K562 (cell line): ENCODE measurements at regions of chr1 and their contacts with region 1.

Region 1: DNA sequence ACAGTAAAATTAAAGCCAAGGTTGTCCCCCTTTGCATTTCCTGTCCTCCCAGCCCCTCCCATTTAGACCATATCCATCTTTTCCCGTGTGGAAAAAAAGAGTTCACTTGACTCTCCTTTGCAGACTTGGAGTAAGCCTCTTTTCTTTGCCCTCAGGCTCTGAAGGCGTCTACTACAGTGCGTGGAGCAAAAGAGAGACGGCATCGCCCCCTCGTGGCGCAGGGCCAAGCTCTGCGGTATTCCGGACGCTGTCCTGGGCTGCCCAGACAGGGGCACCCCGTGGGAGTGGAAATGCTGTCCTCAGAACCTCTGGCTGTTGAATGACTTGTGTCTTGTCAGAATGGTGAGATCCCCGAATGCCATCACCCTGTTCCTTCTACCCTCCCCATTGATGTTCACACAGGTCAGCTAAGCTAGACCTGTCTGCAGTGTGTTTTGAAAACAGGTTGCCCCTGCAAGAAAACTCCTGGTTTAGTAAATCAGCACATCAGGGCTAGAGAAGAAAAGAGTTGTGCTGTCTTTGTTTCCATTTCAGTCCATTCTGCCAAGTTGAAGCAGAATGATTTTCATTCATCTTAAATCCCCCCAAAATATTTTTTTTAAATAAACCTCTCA is 12.3 kb upstream of the GJA8 start:
- DNase-seq: peak; percentile 64 to 83 (median 70)
- ATAC-seq: peak; percentile 100
- H3K4me3 ChIP-seq: no peak overlapping the region
- H3K27ac ChIP-seq: no peak overlapping the region
- H3K4me1 ChIP-seq: no peaks in the 10 kb centered on the region
- H3K27me3 ChIP-seq: peaks cover 2 to 6% of the 10 kb centered on the region in 2 experiments; a peak in 4 of 5 replicates
- CTCF ChIP-seq: peak; percentile 89 to 94 (median 89)
- EP300 ChIP-seq: no peak
- POLR2A ChIP-seq: no peak
- RAD21 ChIP-seq: peak; percentile 81 to 98

Region 2: DNA sequence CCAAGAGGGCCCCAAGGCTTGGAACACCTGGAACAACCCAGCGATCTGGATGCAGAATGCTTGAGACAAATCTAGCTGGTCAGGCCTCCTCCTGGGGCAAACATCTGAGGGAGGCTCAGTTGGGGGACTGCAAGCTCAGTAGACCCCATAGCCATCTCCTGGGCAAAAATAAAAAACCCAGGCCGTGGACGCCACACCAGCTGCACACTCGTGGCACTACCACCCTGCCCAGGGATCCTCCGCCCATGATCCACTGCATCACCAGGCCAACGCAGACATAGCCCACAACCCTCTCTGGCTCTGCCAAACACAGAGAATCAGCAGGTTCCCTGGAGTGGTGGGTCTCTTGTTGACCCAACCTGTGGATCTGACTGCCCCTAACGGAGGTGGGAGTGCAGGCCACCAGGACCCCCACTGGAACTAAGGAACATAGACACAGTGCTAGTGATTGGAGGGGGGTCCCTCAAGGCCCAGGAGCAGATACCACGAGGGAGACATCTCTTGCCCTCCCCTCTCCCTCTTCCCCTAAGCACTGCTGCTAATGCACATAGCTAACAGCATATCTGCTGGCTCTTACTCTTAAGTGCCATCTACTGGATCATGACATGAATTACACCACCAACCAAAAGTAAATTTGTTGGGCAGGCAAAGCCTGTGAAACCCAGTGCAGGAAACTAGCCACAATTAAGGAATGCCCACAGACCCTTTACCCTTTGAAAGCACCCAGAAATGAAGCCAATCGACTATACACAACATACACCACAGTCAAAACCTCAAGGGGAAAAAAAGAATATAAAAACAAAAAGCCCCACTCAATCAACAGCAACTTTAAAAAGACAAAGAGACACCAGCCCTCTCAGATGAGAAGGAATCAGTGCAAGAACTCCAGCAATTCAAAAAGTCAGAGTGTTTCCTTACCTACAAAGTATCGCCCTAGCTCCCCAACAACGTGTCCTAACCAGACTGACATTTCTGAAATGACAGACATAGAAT is 500.5 kb before region 1 on chr1:
- CTCF ChIA-PET with region 1: no interaction called
- POLR2A ChIA-PET with region 1: no interaction called
- in situ Hi-C with region 1: no loop called
- intact Hi-C with region 1: loop called (anchors 10 kb)
- DNase-seq: peak; percentile 47 to 66 (median 56)
- ATAC-seq: peak; percentile 96
- H3K4me3 ChIP-seq: no peak overlapping the region
- H3K27ac ChIP-seq: no peak overlapping the region
- H3K4me1 ChIP-seq: peaks cover 0 to 9% of the 10 kb centered on the region in 2 experiments; a peak in 2 of 5 replicates
- H3K27me3 ChIP-seq: no peaks in the 10 kb centered on the region
- CTCF ChIP-seq: peak; percentile 73 to 83 (median 78)
- EP300 ChIP-seq: no peak
- POLR2A ChIP-seq: no peak
- RAD21 ChIP-seq: peak; percentile 86 to 95

Region 3: GRCh38 chr1:147635342-147635741 is 254.9 kb before region 1 on chr1:
- CTCF ChIA-PET with region 1: no interaction called
- POLR2A ChIA-PET with region 1: no interaction called
- in situ Hi-C with region 1: loop called (anchors 5 kb)
- intact Hi-C with region 1: loop called (anchors 5 kb)
- DNase-seq: no peak
- ATAC-seq: no peak
- H3K4me3 ChIP-seq: no peak overlapping the region
- H3K27ac ChIP-seq: no peak overlapping the region
- H3K4me1 ChIP-seq: peaks cover 0 to 2% of the 10 kb centered on the region in 2 experiments; a peak in 1 of 5 replicates
- H3K27me3 ChIP-seq: peaks cover 2 to 17% of the 10 kb centered on the region in 2 experiments; a peak in 4 of 5 replicates
- CTCF ChIP-seq: no peak
- EP300 ChIP-seq: no peak
- POLR2A ChIP-seq: no peak
- RAD21 ChIP-seq: no peak

Region 4: GRCh38 chr1:147723691-147724323 is 166.5 kb before region 1 on chr1:
- CTCF ChIA-PET with region 1: interaction called, 4 read pairs
- POLR2A ChIA-PET with region 1: no interaction called
- in situ Hi-C with region 1: loop called (anchors 10 kb)
- intact Hi-C with region 1: loop called (anchors 1 kb)
- DNase-seq: peak in 3 of 4 experiments; percentile 12 to 41 (median 36)
- ATAC-seq: peak; percentile 85
- H3K4me3 ChIP-seq: no peak overlapping the region
- H3K27ac ChIP-seq: no peak overlapping the region
- H3K4me1 ChIP-seq: no peaks in the 10 kb centered on the region
- H3K27me3 ChIP-seq: peaks cover 0 to 20% of the 10 kb centered on the region in 2 experiments; a peak in 4 of 5 replicates
- CTCF ChIP-seq: peak; percentile 64 to 65 (median 65)
- EP300 ChIP-seq: no peak
- POLR2A ChIP-seq: no peak
- RAD21 ChIP-seq: peak; percentile 70 to 86

Region 5: DNA sequence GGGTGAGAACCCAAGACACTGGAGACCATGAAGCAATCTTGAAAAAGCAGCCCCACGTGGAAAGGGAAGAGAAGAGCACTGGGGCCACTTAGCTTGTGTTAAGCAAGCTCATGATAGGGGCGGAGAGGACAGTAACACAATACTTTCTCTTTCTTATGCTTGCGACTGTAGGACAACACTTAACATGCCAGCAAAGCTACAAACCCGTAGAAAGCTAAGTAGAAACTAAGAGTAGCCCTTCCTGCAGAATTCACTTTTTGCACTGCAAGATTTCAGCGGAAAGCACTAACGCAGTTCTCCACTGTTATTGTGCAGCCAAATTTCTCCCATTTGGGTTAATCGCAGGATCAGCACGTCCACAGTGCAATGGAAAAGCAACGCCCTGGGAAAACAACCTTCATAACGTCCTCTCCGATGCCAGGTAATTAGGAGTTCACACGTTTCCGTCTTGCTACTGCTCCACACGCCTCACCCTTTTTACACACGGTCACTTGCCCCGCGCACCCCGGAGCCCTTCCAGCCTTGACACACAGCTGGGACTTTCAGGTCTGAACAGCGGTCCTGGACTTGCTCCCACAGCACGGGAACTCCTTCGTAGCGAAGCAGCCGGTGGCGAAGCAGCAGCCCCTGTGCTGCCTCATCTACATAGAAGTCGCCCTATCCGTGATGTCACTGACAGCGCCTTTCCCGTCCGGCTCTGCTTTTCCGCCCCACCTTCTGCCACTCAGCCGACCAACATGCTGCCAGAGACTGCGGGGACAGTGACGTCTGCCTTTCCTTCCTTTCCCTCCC is 444.3 kb after region 1 on chr1:
- CTCF ChIA-PET with region 1: no interaction called
- POLR2A ChIA-PET with region 1: no interaction called
- in situ Hi-C with region 1: no loop called
- intact Hi-C with region 1: no loop called
- DNase-seq: peak; percentile 71 to 94 (median 74)
- ATAC-seq: peak; percentile 95
- H3K4me3 ChIP-seq: peak overlapping the region; percentile 55
- H3K27ac ChIP-seq: peak overlapping the region; percentile 100
- H3K4me1 ChIP-seq: peaks cover 4 to 18% of the 10 kb centered on the region in 2 experiments; a peak in 4 of 5 replicates
- H3K27me3 ChIP-seq: no peaks in the 10 kb centered on the region
- CTCF ChIP-seq: no peak; a peak in 1 of 6 replicates
- EP300 ChIP-seq: peak; percentile 70
- POLR2A ChIP-seq: peak; percentile 100
- RAD21 ChIP-seq: peak; percentile 41 to 43; a peak in 3 of 4 replicates